Heart right ventricle (tissue), 16 donors: ENCODE measurements at regions of chr11 and their contacts with region 1.

Region 1: DNA sequence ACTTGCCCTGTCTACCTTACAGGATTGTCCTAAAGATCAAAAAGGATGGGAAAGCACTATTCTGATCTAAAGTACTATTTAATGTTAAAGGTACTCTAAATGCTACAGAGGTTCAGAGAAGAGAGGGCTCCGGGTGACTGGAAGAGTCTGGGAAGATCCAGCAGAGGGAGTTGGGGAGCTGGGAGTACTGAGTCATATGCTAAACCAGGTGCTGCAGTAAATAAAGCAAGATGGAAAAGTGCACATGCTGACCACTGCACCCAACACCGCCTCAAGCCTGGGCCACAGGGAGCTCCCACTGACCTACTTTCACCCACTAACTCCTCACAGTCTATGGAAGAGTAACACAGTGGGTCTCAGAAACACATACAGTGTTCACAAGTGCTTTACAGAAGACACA is 49.3 kb downstream of the WT1 start:
- DNase-seq: peak in 1 of 2 donors; percentile 31
- ATAC-seq: peak; percentile 60 to 90 (median 78)
- H3K4me3 ChIP-seq: no peak overlapping the region
- H3K27ac ChIP-seq: peak overlapping the region in 3 of 10 donors; percentile 14 to 52 (median 35)
- H3K4me1 ChIP-seq: peaks cover 3 to 25% (median 12%) of the 10 kb centered on the region in 9 donors
- H3K27me3 ChIP-seq: peaks cover 0 to 4% (median 0%) of the 10 kb centered on the region in 7 donors
- CTCF ChIP-seq: peak; percentile 15 to 70 (median 52)

Region 2: GRCh38 chr11:32333320-32333991 is 52.5 kb before region 1 on chr11:
- intact Hi-C with region 1: loop called in 2 of 10 experiments (anchors 5 to 10 kb)
- DNase-seq: peak; percentile 50 to 60
- ATAC-seq: peak; percentile 64 to 87 (median 71)
- H3K4me3 ChIP-seq: peak overlapping the region in 9 of 10 donors; percentile 17 to 57 (median 52)
- H3K27ac ChIP-seq: peak overlapping the region in 6 of 10 donors; percentile 25 to 60 (median 48)
- H3K4me1 ChIP-seq: peaks cover 0 to 12% (median 4%) of the 10 kb centered on the region in 9 donors
- H3K27me3 ChIP-seq: peaks cover 0 to 38% (median 21%) of the 10 kb centered on the region in 7 donors
- CTCF ChIP-seq: peak in 6 of 9 donors; percentile 20 to 46 (median 28)

Region 3: DNA sequence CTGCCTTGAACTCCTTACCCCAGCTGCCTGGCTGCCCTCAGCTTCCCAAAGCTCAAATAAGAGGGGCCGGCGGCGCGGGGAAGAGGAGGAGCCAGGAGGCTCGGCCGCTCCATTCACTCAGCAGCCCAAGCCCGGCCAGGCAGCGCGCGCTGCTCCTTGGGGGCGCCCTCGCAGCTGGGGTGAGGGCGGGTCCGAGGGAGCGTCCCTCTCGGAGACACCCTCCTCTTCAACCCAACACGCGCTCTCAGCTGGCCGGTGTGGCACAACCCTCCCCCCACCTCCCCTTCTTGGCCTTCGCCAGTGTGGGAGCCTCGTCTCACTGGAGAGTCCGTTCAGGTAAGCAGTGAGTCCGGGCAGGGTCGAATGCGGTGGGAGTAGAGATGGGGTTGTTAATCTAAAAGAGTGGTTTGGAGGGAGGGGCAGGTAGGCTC is 49.5 kb after region 1 on chr11 and contains the start of gene WT1:
- intact Hi-C with region 1: loop called in 1 of 10 experiments (anchors 2 kb)
- DNase-seq: peak; percentile 64
- ATAC-seq: peak; percentile 65 to 78 (median 71)
- H3K4me3 ChIP-seq: peak within 1 kb of the TSS; percentile 46 to 71 (median 58)
- H3K27ac ChIP-seq: peak within 1 kb of the TSS; percentile 85 to 95 (median 93)
- H3K4me1 ChIP-seq: peaks cover 0 to 65% (median 33%) of the 10 kb centered on the region in 9 donors
- H3K27me3 ChIP-seq: peaks cover 9 to 100% (median 95%) of the 10 kb centered on the region in 7 donors
- CTCF ChIP-seq: no peak
- total RNA-seq, gene WT1: 1.9 to 4.6 (median 2.9) TPM

Region 4: GRCh38 chr11:32562839-32563599 is 177.0 kb after region 1 on chr11:
- intact Hi-C with region 1: loop called in 1 of 10 experiments (anchors 10 kb)
- DNase-seq: no peak
- ATAC-seq: no peak
- H3K4me3 ChIP-seq: no peak overlapping the region
- H3K27ac ChIP-seq: no peak overlapping the region
- H3K4me1 ChIP-seq: peaks cover 0 to 5% (median 0%) of the 10 kb centered on the region in 9 donors
- H3K27me3 ChIP-seq: peaks cover 0 to 4% (median 0%) of the 10 kb centered on the region in 7 donors
- CTCF ChIP-seq: no peak

Region 5: DNA sequence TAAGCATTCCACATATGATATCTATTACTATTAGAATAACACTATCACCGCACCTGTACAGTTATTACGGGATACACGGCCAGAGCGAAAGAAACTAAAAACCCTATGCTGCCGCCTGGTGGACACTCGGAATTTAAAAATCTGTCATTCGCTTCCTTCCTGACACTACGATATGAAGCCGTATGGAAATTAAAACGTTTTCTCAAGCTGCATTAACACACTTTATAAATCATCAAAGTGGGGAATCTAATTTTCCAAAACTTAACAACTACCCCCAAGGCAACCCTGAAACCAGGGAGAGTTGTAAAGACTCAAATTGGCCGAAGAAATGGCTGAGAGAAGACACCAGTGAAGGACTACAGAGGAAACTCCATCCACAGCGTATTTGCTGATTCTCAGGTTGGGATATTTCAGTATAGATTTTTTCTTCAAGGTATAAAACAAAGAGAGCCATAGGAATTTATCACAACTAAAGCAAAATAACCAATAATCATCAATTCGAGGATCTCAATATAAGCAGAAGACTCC is 407.0 kb after region 1 on chr11:
- intact Hi-C with region 1: loop called in 3 of 10 experiments (anchors 5 kb)
- DNase-seq: peak; percentile 24 to 51
- ATAC-seq: peak in 6 of 8 donors; percentile 20 to 79 (median 58)
- H3K4me3 ChIP-seq: peak overlapping the region in 5 of 10 donors; percentile 0 to 21 (median 12)
- H3K27ac ChIP-seq: no peak overlapping the region
- H3K4me1 ChIP-seq: peaks cover 0 to 9% (median 0%) of the 10 kb centered on the region in 9 donors
- H3K27me3 ChIP-seq: peaks cover 0 to 20% (median 6%) of the 10 kb centered on the region in 7 donors
- CTCF ChIP-seq: peak; percentile 43 to 79 (median 72)